ENCODE measurements at regions of chr11 and their contacts with region 1.

Region 1: GRCh38 chr11:109939166-109939810 is 153.9 kb upstream of the ZC3H12C start:
- DNase-seq: peak in 1 of 2 donors; percentile 9
- ATAC-seq: peak; percentile 73 to 95
- H3K4me3 ChIP-seq: no peak overlapping the region
- H3K27ac ChIP-seq: no peak overlapping the region
- H3K4me1 ChIP-seq: peaks cover 0 to 3% of the 10 kb centered on the region in 2 donors
- H3K27me3 ChIP-seq: no peaks in the 10 kb centered on the region
- CTCF ChIP-seq: peak in 4 of 5 experiments; percentile 26 to 61 (median 46)
- POLR2A ChIP-seq: no peak

Region 2: GRCh38 chr11:109798521-109798920 is 140.8 kb before region 1 on chr11:
- in situ Hi-C with region 1: no loop called
- intact Hi-C with region 1: no loop called
- DNase-seq: no peak
- ATAC-seq: no peak
- H3K4me3 ChIP-seq: no peak overlapping the region
- H3K27ac ChIP-seq: no peak overlapping the region
- H3K4me1 ChIP-seq: no peaks in the 10 kb centered on the region
- H3K27me3 ChIP-seq: no peaks in the 10 kb centered on the region
- CTCF ChIP-seq: no peak
- POLR2A ChIP-seq: no peak

Region 3: GRCh38 chr11:109853156-109853776 is 86.0 kb before region 1 on chr11:
- in situ Hi-C with region 1: no loop called
- intact Hi-C with region 1: loop called (anchors 10 kb)
- DNase-seq: no peak
- ATAC-seq: no peak
- H3K4me3 ChIP-seq: no peak overlapping the region
- H3K27ac ChIP-seq: no peak overlapping the region
- H3K4me1 ChIP-seq: no peaks in the 10 kb centered on the region
- H3K27me3 ChIP-seq: no peaks in the 10 kb centered on the region
- CTCF ChIP-seq: peak in 2 of 5 experiments; percentile 21 to 23
- POLR2A ChIP-seq: no peak